Naive thymus-derived CD4-positive, alpha-beta T cell (primary cell): ENCODE measurements at regions of chr11 and their contacts with region 1.

Region 1: GRCh38 chr11:9103208-9103898 is 12.0 kb upstream of the SCUBE2 start:
- DNase-seq: no peak
- ATAC-seq: no peak
- H3K4me3 ChIP-seq: no peak overlapping the region
- H3K4me3 Mint-ChIP-seq: no peak overlapping the region
- H3K27ac ChIP-seq: no peak overlapping the region
- H3K27ac Mint-ChIP-seq: no peak overlapping the region
- H3K4me1 ChIP-seq: no peaks in the 10 kb centered on the region
- H3K4me1 Mint-ChIP-seq: no peaks in the 10 kb centered on the region
- H3K27me3 ChIP-seq: no peaks in the 10 kb centered on the region
- H3K27me3 Mint-ChIP-seq: peaks cover 8 to 43% (median 10%) of the 10 kb centered on the region in 5 donors

Region 2: DNA sequence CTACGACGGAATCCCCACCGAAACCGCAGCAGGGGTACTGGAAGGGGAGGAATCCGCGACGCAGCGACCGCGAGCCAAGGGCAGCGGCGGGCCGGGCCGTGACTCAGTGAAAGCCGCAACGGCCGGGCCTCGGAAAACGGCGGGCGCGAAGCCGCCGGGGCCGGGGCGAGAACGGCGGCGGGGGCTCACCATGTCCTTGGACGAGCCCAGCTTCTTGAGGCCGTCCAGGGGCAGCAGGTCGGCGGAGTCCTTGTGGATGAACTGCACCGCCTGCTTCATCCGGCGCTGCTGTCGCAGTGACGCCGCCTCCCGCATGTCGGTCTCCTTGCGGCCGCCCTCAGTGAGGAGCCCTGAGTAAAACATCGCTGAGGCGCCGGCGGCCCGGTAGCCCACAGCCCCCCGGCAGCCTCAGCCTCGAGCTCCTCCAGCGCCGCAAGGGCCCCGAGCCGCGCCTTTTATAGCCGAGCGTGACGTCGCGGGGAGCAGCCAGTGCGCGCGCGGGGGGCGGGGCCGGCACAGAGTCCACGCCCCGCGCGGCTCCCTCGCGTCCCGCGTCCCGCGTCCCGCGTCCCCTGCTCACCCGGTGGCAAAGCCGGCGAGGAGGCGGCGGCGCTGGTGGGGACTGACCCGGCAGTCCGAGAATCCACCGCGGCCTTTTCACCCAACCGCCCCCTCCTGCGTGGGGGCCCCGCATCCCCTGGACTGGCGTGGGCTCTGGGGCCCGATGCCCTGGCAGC is 99.6 kb before region 1 on chr11 and contains the start of gene NRIP3:
- CTCF ChIA-PET with region 1: no interaction called
- POLR2A ChIA-PET with region 1: no interaction called
- intact Hi-C with region 1: no loop called
- DNase-seq: peak; percentile 72 to 86 (median 80)
- ATAC-seq: peak; percentile 89
- H3K4me3 ChIP-seq: peak within 1 kb of the TSS; percentile 32
- H3K4me3 Mint-ChIP-seq: peak within 1 kb of the TSS; percentile 81 to 90 (median 86)
- H3K27ac ChIP-seq: no peak within 1 kb of the TSS
- H3K27ac Mint-ChIP-seq: peak within 1 kb of the TSS; percentile 12 to 87 (median 62)
- H3K4me1 ChIP-seq: peaks cover 8 to 12% of the 10 kb centered on the region in 2 donors
- H3K4me1 Mint-ChIP-seq: peaks cover 13 to 31% (median 20%) of the 10 kb centered on the region in 7 donors
- H3K27me3 ChIP-seq: peaks cover 3 to 8% of the 10 kb centered on the region in 2 donors
- H3K27me3 Mint-ChIP-seq: peaks cover 30 to 56% (median 41%) of the 10 kb centered on the region in 5 donors
- total RNA-seq, gene NRIP3: 0.59 to 11.0 (median 3.4) TPM

Region 3: GRCh38 chr11:9158898-9159391 is 55.6 kb after region 1 on chr11:
- CTCF ChIA-PET with region 1: no interaction called
- POLR2A ChIA-PET with region 1: interaction called, 10 read pairs
- intact Hi-C with region 1: no loop called
- DNase-seq: no peak
- ATAC-seq: peak; percentile 48
- H3K4me3 ChIP-seq: no peak overlapping the region
- H3K4me3 Mint-ChIP-seq: no peak overlapping the region
- H3K27ac ChIP-seq: no peak overlapping the region
- H3K27ac Mint-ChIP-seq: peak overlapping the region in 1 of 9 donors; percentile 2
- H3K4me1 ChIP-seq: no peaks in the 10 kb centered on the region
- H3K4me1 Mint-ChIP-seq: peaks cover 0 to 12% (median 0%) of the 10 kb centered on the region in 7 donors
- H3K27me3 ChIP-seq: no peaks in the 10 kb centered on the region
- H3K27me3 Mint-ChIP-seq: no peaks in the 10 kb centered on the region

Region 4: GRCh38 chr11:9203691-9204311 is 100.4 kb after region 1 on chr11:
- CTCF ChIA-PET with region 1: no interaction called
- POLR2A ChIA-PET with region 1: no interaction called
- intact Hi-C with region 1: no loop called
- DNase-seq: peak in 7 of 9 donors; percentile 13 to 50 (median 24)
- ATAC-seq: peak; percentile 61
- H3K4me3 ChIP-seq: no peak overlapping the region
- H3K4me3 Mint-ChIP-seq: no peak overlapping the region
- H3K27ac ChIP-seq: no peak overlapping the region
- H3K27ac Mint-ChIP-seq: peak overlapping the region in 2 of 9 donors; percentile 9 to 50
- H3K4me1 ChIP-seq: no peaks in the 10 kb centered on the region
- H3K4me1 Mint-ChIP-seq: peaks cover 15 to 55% (median 26%) of the 10 kb centered on the region in 7 donors
- H3K27me3 ChIP-seq: no peaks in the 10 kb centered on the region
- H3K27me3 Mint-ChIP-seq: no peaks in the 10 kb centered on the region